H1 (cell line): ENCODE measurements at regions of chr3 and their contacts with region 1.

Region 1: GRCh38 chr3:133295199-133295901 is 104.5 kb upstream of the BFSP2 start:
- DNase-seq: no peak
- H3K4me3 ChIP-seq: no peak overlapping the region
- H3K27ac ChIP-seq: no peak overlapping the region
- H3K4me1 ChIP-seq: peaks cover 0 to 5% (median 3%) of the 10 kb centered on the region in 4 experiments; a peak in 3 of 7 replicates
- H3K27me3 ChIP-seq: no peaks in the 10 kb centered on the region
- CTCF ChIP-seq: no peak
- EP300 ChIP-seq: no peak
- POLR2A ChIP-seq: no peak
- RAD21 ChIP-seq: no peak

Region 2: DNA sequence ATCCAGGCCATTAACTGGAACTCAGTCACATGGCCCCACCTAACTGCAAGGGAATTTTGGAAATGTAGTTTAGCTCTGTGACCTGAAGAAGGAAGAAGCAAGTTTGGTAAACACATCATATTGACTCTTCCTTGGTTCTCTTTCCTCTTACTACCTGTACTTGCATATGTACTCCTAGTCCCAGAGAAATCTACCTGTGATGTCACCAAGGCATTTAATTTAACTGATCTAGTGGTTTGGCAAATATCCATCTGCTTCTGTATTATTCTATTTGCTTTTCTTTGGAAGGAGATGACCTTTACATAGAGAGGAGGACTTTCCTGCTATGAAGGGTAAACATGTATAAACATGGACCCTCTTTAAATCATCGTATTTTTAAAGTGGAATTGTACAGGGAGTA is 106.4 kb before region 1 on chr3:
- CTCF ChIA-PET with region 1: no interaction called
- POLR2A ChIA-PET with region 1: no interaction called
- DNase-seq: no peak
- H3K4me3 ChIP-seq: no peak overlapping the region
- H3K27ac ChIP-seq: no peak overlapping the region
- H3K4me1 ChIP-seq: peaks cover 0 to 10% (median 3%) of the 10 kb centered on the region in 4 experiments; a peak in 1 of 7 replicates
- H3K27me3 ChIP-seq: no peaks in the 10 kb centered on the region
- CTCF ChIP-seq: no peak
- EP300 ChIP-seq: no peak
- POLR2A ChIP-seq: no peak
- RAD21 ChIP-seq: no peak

Region 3: DNA sequence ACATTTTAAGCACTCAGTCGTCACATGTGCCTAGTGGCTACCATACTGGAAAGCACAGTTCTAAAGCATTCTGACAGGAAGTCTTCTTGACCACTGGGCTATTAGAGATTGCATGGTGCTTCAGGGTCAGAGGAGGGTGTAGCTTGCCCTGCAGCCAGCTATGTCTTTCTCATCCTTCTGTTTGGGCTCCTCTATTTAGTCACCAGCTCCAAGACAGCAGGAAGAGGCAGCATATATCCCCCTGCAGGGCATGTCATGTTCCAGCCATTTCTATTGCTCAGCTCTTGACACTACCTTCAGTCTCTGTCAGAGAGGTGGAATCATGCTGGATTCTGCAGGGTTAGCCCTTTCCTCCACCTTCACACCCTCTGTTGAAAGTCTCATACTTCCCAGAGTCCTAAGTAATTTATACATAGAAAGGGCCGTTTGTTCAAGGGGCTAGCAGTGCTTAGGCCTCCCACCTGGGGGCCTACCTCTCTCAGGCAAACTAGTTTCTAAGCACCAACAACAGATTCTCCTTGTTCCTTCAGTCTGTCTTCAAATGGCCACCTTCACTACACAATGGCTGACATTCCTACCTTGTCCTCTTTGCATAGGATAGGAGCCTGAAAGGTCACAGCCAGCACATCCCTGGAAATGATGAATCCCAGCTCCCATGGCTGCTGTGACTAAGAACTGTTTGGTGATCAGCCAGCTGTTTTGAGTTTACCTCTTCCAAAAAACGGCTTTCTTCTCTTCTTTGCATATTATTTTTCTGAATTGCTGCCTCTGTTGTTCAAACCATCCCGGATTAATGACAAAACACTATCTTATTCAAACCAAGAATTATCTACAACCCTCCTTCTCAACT is 11.2 kb before region 1 on chr3:
- CTCF ChIA-PET with region 1: interaction called, 17 read pairs
- POLR2A ChIA-PET with region 1: no interaction called
- DNase-seq: peak in 1 of 2 experiments; percentile 25
- H3K4me3 ChIP-seq: no peak overlapping the region
- H3K27ac ChIP-seq: no peak overlapping the region
- H3K4me1 ChIP-seq: peaks cover 0 to 5% (median 0%) of the 10 kb centered on the region in 4 experiments; a peak in 2 of 7 replicates
- H3K27me3 ChIP-seq: no peaks in the 10 kb centered on the region
- CTCF ChIP-seq: peak in 2 of 3 experiments; percentile 38 to 60; a peak in 3 of 4 replicates
- EP300 ChIP-seq: no peak
- POLR2A ChIP-seq: no peak
- RAD21 ChIP-seq: peak; percentile 62 to 67